Ascending aorta (tissue), 2 donors: ENCODE measurements at regions of chr2 and their contacts with region 1.

Region 1: DNA sequence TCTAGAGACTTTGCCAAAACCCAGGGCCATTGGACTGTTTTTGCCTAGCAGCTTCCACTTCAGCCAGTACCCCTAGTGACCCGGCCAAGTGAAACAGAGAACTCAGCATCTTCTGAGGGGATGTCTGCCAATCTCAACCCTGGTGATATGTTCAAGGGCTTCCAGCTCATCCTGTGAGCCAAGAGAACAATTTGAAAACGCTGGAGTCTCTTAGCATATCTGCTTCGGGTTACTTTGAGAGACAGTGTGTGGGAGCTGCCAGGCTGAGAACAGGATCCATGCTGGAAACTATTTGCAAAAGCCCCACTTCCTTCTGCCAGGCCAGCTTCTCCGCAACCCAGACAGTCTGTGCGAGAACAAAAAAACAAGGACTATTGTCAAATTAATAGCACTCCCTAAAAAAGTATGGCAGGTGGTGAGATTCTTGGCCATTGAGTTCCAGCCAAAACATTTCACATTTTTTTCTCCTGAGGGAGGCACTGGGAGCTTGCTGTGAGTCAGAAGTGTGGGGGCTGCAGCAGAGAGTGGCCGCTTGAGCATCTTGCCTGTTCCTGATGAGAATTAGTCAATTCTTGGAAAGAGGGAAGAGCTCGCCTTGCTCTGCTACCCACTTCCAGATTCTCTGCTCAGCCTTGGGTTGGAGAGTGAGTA is 395.6 kb upstream of the TRIB2 start:
- DNase-seq: peak in 1 of 2 donors; percentile 83
- H3K4me3 ChIP-seq: peak overlapping the region in 1 of 2 donors; percentile 25
- H3K27ac ChIP-seq: peak overlapping the region; percentile 76 to 87
- H3K4me1 ChIP-seq: peaks cover 3 to 15% of the 10 kb centered on the region in 2 donors
- H3K27me3 ChIP-seq: no peaks in the 10 kb centered on the region
- CTCF ChIP-seq: no peak

Region 2: DNA sequence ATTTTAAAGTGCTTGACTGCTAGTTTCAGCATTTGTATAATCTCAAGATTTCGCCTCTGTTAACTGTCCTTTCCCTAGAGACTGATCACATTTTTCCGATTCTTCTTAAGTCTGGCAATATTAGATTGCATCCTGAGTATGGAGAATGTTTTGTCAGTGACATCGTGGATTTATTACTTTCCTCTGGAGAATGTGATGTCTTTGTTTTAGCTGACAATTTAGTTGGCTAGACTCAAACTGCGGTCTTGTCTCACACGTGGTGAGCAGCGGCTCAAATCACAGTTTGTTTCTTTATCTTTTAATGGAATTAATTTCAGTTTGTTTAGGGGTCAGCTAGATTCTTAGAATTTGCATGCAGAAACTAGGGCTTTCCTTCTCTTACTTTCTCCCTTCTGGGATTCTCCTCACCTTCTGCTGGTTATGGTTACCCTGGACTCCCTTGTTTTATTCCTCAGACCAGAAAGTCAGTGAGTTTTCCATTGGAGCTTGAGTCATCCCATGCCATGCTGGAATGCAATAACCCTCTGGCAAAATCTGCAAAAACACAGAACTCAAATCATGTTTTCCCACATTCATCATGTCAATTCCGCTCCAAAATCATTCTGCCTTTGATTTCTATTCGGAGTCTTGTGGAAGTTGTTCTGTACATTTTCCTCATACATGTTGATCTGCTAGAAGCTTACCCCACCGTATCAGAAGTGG is 68.4 kb after region 1 on chr2:
- intact Hi-C with region 1: loop called (anchors 5 kb)
- DNase-seq: no peak
- H3K4me3 ChIP-seq: peak overlapping the region in 1 of 2 donors; percentile 48
- H3K27ac ChIP-seq: peak overlapping the region; percentile 9 to 40
- H3K4me1 ChIP-seq: peaks cover 9% of the 10 kb centered on the region in 2 donors
- H3K27me3 ChIP-seq: no peaks in the 10 kb centered on the region
- CTCF ChIP-seq: no peak

Region 3: DNA sequence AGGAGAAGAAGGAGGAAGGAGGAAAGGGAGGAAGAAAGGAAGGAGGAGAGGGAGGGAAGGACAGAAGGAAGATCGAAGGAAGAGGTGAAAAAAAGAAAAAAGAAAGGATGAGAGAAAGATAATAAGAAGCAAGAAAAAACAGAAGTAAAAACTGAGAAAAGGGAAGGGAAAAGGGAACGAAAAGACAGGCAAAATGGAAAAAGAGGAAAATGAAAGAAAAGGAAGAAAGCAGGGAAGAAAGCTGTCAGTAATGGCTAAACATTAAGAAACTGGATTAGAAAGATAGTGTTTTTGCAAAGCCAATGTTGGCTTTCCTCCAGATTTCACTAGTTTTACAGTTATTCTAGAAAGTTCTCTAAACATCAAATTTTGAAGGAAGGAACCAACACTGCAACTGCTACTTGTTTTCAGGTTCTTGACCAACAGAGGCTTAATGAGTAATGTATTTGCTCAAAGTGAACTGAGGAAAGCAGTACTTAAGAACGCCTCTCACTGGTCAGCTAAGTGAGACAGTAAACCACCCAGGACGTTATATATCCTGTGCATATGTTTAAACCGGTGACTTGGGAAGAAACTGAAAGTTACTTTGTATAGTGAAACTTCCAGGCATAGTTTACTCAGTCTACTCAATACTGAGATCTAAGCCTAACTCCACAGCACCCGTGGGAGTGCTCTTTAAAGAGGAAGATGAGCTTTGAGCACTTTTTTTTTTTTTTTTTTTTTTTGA is 109.5 kb after region 1 on chr2:
- intact Hi-C with region 1: loop called (anchors 5 kb)
- DNase-seq: no peak
- H3K4me3 ChIP-seq: no peak overlapping the region
- H3K27ac ChIP-seq: peak overlapping the region; percentile 4 to 20
- H3K4me1 ChIP-seq: peaks cover 0 to 14% of the 10 kb centered on the region in 2 donors
- H3K27me3 ChIP-seq: no peaks in the 10 kb centered on the region
- CTCF ChIP-seq: no peak

Region 4: DNA sequence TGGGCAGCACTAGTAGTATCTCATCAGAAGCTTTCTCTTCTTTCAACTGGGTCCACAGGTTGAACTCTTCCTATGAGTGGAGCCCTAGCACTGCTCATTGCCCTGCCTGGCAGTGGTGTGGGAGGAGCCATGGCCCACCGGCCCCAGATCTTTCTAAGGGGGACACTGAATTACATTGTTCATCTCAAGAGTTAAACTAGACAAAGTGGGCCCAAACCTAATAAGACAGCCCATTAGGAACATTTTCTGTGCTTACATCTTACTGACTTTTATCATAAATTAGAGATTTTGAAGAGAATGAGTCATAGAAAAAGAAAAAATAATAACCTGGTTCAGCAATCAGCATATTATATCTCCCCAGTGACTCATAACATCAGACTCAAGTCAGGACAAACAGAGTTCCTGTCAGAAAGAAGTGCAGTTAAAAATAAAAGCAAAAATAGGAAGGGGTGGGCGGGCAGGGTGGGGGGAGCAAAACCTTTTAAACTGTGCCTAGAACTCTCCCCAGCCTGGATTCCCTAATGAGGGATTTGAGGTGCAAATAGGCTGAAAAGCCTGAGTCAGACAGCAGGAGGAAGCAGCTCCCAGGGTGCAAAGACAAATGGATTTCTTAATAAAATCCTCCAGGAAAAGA is 234.0 kb after region 1 on chr2:
- intact Hi-C with region 1: loop called (anchors 10 kb)
- DNase-seq: no peak
- H3K4me3 ChIP-seq: no peak overlapping the region
- H3K27ac ChIP-seq: peak overlapping the region; percentile 41 to 47
- H3K4me1 ChIP-seq: peaks cover 0 to 12% of the 10 kb centered on the region in 2 donors
- H3K27me3 ChIP-seq: no peaks in the 10 kb centered on the region
- CTCF ChIP-seq: peak in 1 of 3 experiments; percentile 26